Heart left ventricle (tissue), 16 donors: ENCODE measurements at regions of chr1 and their contacts with region 1.

Region 1: GRCh38 chr1:61453111-61453961 is 271.6 kb downstream of the TM2D1 start:
- DNase-seq: peak; percentile 86 to 90 (median 88)
- ATAC-seq: peak; percentile 69 to 84 (median 81)
- H3K4me3 ChIP-seq: no peak overlapping the region
- H3K27ac ChIP-seq: peak overlapping the region; percentile 64 to 90 (median 78)
- H3K4me1 ChIP-seq: peaks cover 17 to 65% (median 61%) of the 10 kb centered on the region in 12 donors
- H3K27me3 ChIP-seq: no peaks in the 10 kb centered on the region
- CTCF ChIP-seq: peak; percentile 75 to 90 (median 80)
- POLR2A ChIP-seq: no peak

Region 2: GRCh38 chr1:60668585-60668984 is 784.8 kb before region 1 on chr1:
- intact Hi-C with region 1: no loop called
- DNase-seq: peak in 1 of 5 donors; percentile 19
- ATAC-seq: no peak
- H3K4me3 ChIP-seq: no peak overlapping the region
- H3K27ac ChIP-seq: no peak overlapping the region
- H3K4me1 ChIP-seq: no peaks in the 10 kb centered on the region
- H3K27me3 ChIP-seq: no peaks in the 10 kb centered on the region
- CTCF ChIP-seq: no peak
- POLR2A ChIP-seq: no peak

Region 3: DNA sequence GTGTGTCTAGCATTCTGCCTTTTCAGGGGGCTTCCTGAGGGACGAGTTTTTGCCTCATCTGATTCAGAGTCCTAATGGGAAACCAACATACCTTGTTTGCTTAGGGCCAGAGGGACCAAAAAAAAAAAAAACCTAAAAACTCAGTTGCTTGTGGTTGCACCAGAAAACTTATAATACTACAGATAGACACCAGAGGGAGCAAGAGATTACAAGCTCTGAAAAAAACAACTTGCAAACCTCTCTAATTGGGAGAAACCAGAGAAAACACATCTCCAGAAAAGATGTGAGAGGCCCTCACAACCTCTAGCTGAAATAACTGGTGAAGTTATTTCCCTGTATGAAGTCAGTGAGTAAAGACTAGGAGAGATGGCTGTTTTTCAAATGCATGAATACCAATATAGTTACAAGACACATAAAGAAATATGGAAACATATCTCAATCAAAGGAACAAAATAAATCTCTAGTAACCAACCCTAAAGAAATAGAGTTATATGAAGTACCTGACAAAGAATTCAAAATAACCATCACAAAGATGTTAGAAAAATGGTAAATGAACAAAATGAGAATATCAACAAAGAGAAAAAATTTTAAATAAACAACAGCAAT is 604.6 kb before region 1 on chr1:
- intact Hi-C with region 1: loop called in 1 of 10 experiments (anchors 10 kb)
- DNase-seq: no peak
- ATAC-seq: no peak
- H3K4me3 ChIP-seq: no peak overlapping the region
- H3K27ac ChIP-seq: no peak overlapping the region
- H3K4me1 ChIP-seq: peaks cover 0 to under 1% (median 0%) of the 10 kb centered on the region in 12 donors
- H3K27me3 ChIP-seq: no peaks in the 10 kb centered on the region
- CTCF ChIP-seq: peak; percentile 29 to 62 (median 52)
- POLR2A ChIP-seq: no peak

Region 4: DNA sequence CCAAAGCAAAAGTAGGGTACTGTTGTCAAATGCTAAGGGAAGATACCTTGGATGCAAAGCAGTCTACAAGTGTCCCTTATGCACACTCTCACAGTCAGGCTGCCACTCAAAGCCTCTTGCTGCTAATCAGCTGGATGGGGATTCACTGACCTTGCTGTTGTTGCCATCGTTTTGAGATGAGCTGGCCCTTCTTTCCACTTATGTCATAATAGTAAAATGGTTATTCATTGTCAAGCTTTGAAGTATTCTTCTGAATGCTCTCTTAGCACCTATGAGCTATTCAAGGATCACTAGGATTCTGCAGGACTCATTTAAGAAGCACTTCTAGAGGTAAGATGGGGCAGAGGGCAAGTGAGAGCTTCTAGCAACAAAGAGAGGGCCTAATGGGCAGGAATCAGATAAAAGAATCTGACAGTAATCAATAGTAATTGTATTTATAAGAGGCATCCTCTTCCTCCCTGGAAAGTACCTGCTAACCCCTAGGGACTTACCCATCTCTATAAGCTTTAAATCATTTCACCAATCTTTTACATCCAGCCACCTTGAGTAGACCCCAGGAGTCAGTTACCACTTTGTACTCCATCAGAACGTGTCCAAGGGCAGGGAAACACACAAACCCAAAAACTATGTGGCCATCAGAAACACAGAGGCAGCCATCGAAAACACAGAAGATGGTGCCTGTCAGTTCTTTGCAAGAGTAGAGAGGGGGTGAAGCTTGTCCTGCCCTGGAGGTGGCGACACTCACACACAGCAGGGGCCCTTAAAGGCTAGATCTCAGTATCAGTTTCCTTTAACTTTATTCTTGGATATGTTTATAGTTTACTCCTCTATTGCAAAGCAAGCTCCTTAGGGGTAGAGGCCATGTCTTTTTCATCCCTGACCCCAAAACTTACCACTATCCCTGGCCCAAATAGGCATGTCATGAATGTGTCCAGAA is 474.6 kb before region 1 on chr1:
- intact Hi-C with region 1: loop called in 6 of 10 experiments (anchors 5 to 10 kb)
- DNase-seq: no peak
- ATAC-seq: peak in 3 of 4 donors; percentile 47 to 74 (median 54)
- H3K4me3 ChIP-seq: no peak overlapping the region
- H3K27ac ChIP-seq: no peak overlapping the region
- H3K4me1 ChIP-seq: peaks cover 0 to 12% (median 2%) of the 10 kb centered on the region in 12 donors
- H3K27me3 ChIP-seq: no peaks in the 10 kb centered on the region
- CTCF ChIP-seq: peak; percentile 36 to 64 (median 42)
- POLR2A ChIP-seq: no peak

Region 5: DNA sequence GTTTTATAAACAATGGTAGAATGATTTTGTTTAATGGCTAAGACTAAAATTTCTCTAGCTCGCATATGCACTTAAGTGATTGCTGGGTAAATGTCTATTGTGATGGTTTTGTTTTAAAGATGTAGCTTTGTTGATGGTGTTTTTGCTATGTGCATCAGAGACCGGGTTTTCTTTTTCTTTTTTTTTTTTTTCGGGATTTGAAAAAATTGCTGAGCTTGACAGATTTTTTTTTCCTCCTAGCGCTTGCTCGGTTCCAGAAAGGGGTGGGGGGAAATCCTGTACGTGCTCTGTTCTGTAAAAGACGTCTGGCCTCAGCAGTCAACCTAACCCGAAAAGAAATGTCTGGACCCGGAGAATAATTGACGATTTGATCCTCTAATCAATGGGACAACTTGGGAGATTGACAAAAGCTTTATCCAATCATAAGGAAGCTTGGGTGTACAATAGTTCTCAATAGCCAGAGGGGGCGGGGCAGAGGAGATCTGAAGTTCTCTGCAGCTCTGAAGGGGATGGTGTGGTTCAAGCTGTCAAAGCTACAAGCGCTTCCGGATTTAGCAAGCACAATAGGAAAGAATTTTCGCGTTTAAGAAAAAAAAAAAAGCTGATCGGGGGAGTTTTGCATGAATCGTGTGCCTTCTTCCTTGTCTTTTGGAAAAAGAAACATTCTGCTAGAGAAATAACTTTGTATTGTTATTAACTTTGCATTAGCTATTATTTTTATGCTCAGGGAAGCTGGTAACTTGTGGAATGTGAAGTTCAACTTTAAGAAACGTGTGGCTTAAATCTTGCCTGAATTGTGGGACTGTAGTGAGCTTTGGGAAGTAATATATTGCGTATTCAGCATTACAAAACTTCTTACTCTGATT is 375.4 kb before region 1 on chr1:
- intact Hi-C with region 1: loop called in 6 of 10 experiments (anchors 2 to 5 kb)
- DNase-seq: peak; percentile 90 to 98 (median 96)
- ATAC-seq: peak; percentile 82 to 86 (median 84)
- H3K4me3 ChIP-seq: peak overlapping the region; percentile 44 to 81 (median 64)
- H3K27ac ChIP-seq: peak overlapping the region; percentile 75 to 98 (median 94)
- H3K4me1 ChIP-seq: peaks cover 12 to 47% (median 38%) of the 10 kb centered on the region in 12 donors
- H3K27me3 ChIP-seq: no peaks in the 10 kb centered on the region
- CTCF ChIP-seq: peak in 2 of 12 donors; percentile 8 to 15
- POLR2A ChIP-seq: peak in 1 of 2 donors; percentile 31

Region 6: DNA sequence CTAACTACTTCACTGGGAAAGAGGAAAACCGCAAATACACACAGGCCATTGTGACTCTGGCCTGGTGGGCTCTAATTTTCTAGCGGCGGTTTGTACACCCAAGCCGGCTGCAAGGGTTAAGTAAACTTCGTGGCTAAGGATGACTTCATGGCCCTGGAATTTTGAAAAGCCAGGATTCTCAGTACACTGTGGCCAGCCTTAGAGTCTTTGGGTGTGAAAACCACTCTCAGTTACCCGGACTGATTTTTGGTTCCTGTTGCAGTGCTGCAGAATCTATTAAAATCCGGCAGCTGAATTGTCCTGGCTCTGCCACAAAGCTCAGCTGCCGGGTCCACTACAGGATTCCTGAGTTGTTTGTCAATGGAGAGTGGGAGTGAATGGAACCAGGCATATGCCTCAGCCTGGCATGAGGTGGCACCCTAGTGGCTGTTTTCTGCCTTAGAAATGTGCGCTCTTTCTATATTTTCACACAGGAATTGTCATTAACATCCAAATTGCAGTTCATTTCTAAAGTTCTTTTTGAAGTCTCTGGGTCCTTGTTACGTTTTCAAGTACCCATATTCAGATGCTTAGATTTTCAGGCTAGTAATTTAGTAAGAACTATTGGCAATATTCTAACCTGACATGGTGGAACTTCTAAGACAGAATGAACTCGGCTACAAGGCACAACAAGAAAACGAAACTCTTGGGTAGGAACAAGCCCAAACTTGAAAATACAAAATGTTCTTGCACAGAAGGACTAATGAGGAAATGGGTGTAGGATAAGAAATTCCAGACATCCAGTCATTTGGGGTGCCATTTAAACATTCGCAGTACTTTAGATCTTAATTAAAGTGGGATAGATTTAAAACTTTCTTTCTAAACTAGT is 115.1 kb before region 1 on chr1:
- intact Hi-C with region 1: loop called in 8 of 10 experiments (anchors 2 to 10 kb)
- DNase-seq: peak in 4 of 5 donors; percentile 62 to 74 (median 72)
- ATAC-seq: peak; percentile 84 to 90 (median 87)
- H3K4me3 ChIP-seq: peak overlapping the region in 9 of 12 donors; percentile 3 to 45 (median 14)
- H3K27ac ChIP-seq: peak overlapping the region; percentile 42 to 86 (median 70)
- H3K4me1 ChIP-seq: peaks cover 2 to 56% (median 35%) of the 10 kb centered on the region in 12 donors
- H3K27me3 ChIP-seq: no peaks in the 10 kb centered on the region
- CTCF ChIP-seq: peak; percentile 48 to 76 (median 66)
- POLR2A ChIP-seq: no peak

Region 7: DNA sequence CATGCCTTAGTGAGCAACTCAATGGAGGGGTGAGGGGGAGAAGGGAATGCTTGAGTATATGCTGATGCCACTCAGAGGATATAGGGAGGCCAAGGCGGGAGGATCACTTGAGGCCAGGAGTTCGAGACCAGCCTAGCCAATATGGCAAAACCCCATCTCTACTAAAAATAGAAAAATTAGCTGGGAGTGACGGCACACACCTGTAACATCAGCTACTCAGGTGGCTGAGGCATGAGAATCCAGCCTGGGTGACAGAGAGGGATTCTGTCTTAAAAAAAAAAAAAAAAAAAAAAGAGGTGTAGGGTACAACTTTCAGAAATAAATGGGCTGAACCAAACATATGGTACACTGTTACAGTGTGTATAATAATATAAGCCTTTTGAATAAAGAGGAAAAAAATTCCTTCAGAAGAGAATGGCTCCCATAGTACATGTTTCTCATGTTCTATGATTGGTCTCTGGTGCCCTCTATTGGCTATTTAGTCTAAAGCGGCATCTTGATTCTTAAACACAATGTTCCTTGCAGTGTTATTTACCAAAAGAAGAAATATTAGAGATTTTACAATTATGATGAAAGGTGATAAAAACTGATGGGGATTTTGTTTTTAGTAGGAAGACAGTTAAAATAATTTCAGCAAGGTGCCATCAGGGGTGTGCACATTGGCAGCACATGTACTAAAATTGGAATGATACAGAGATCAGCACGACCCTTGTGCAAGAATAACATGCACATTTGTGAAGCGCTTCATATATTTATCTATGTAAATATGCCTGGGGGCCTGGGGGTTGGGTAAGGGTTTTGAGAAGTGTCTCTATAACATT is 398.7 kb after region 1 on chr1:
- intact Hi-C with region 1: loop called in 1 of 10 experiments (anchors 10 kb)
- DNase-seq: peak in 1 of 5 donors; percentile 20
- ATAC-seq: peak in 3 of 4 donors; percentile 54 to 77 (median 72)
- H3K4me3 ChIP-seq: no peak overlapping the region
- H3K27ac ChIP-seq: no peak overlapping the region
- H3K4me1 ChIP-seq: peaks cover 0 to 5% (median 0%) of the 10 kb centered on the region in 12 donors
- H3K27me3 ChIP-seq: no peaks in the 10 kb centered on the region
- CTCF ChIP-seq: peak; percentile 53 to 84 (median 76)
- POLR2A ChIP-seq: no peak

Region 8: DNA sequence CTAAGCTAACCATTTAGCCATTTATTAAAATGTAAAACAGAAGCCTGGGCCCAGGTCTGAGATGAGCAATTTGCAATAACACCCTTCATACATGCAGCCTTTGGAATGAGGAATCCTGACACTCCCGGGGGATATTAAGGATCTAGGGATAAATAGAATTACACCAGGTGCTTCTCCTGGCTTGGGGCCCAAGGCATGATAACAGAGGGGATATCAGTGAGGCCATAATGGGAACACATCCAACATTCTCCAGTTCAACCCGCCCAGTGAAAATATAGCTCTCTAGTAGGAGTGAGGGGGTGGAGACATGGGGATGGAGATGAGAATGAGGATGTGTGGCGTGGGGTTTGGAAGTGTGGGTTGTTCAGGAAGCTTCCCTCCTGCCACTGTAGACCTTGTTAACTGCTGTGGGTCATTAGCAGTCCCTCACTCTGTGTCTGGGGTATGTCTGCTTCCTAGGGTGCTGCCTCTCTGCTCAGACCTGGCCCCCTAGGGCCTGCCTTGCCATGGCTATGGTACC is 923.8 kb after region 1 on chr1:
- intact Hi-C with region 1: no loop called
- DNase-seq: no peak
- ATAC-seq: no peak
- H3K4me3 ChIP-seq: no peak overlapping the region
- H3K27ac ChIP-seq: no peak overlapping the region
- H3K4me1 ChIP-seq: no peaks in the 10 kb centered on the region
- H3K27me3 ChIP-seq: no peaks in the 10 kb centered on the region
- CTCF ChIP-seq: no peak
- POLR2A ChIP-seq: no peak